ENCODE measurements at regions of chr3 and their contacts with region 1.

Region 1: DNA sequence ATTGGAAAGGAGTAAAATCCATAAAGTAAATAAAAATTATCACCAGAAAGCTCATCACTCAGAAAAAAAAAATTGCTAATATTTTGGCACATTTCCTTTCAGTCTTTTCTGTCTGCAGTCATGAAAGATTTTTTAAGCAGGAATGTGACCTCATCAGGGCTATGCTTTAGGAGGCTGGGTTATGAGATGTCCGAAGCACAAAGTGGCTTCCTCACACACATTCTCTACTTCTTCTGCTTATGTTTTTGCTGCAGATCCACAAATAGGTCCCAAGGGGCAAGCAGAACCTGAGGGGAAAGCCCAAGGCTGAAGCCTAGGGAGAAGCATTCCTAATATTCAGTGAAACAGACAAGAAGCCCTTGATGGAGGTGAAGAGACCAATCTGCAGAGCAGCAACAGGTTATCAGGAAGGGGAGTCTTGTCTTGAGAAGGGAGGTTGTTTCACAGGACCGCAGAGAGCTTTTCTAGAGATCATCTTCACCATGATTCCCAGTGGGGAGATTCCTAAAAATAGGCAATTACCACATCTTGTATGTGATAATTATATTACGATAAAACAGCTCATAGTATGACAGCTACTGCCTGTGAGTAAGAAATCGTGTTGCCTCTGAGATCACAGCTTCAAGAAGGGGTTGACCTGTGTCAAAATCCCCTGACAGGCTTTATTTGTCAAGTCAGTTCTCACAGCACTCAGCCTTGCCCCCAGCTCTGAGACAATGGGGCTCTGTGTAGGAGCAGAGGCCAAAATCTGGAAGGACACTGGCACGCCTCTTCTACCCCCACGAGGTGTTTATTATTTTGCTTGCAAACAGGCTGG is 60.5 kb downstream of the IGF2BP2 start:
- DNase-seq: no peak
- H3K4me3 Mint-ChIP-seq: no peak overlapping the region
- H3K27ac Mint-ChIP-seq: no peak overlapping the region
- H3K4me1 Mint-ChIP-seq: no peaks in the 10 kb centered on the region
- H3K27me3 Mint-ChIP-seq: peaks cover 58% of the 10 kb centered on the region

Region 2: DNA sequence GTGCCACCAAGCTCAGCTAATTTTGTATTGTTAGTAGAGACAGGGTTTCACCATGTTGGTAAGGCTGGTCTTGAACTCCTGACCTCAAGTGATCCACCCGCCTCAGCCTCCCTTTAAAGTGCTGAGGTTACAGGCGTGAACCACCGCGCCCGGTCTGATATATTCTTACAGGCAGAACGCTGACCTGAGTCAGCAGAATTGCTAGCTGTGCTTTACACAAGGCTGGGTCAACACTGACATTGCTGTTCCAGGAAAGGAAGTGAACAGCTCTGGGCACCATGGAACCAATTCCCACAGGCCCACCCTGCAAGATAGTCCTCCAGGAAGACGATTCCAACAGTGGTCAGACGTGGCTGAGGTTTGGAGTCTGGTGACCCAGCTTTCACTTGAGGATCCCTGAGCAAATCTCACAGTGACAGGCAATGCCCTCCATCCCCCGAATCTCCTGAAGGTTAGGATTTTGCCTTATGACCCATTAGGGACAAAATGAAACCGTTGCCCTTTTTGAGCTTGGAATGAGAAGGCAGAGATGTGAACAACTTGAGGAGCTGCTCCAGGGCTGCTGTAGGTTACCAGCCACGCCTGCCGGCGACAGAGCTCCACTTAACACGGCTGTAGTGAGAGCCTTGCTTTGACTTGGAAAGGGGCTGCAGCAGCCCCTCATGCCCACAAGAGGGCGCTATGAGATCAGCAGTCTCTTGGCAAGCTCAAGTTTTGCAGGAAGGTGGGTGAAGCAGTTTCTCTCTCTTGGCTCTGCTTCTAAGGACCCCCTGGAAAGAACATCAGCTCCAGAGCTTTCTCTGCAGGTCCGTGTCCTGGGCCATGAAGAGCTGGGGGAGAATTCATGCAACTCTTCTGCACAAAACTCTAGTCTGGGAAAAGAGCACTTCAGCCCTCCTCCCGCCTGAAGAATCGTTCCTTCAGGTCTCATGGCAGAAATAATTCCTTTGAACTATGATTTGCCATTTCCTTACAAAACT is 104.1 kb before region 1 on chr3:
- intact Hi-C with region 1: loop called (anchors 1 kb)
- DNase-seq: peak; percentile 91
- H3K4me3 Mint-ChIP-seq: no peak overlapping the region
- H3K27ac Mint-ChIP-seq: no peak overlapping the region
- H3K4me1 Mint-ChIP-seq: no peaks in the 10 kb centered on the region
- H3K27me3 Mint-ChIP-seq: peaks cover 16% of the 10 kb centered on the region

Region 3: GRCh38 chr3:185677146-185677829 is 87.1 kb before region 1 on chr3:
- intact Hi-C with region 1: loop called (anchors 1 kb)
- DNase-seq: peak; percentile 74
- H3K4me3 Mint-ChIP-seq: no peak overlapping the region
- H3K27ac Mint-ChIP-seq: no peak overlapping the region
- H3K4me1 Mint-ChIP-seq: no peaks in the 10 kb centered on the region
- H3K27me3 Mint-ChIP-seq: peaks cover 38% of the 10 kb centered on the region

Region 4: DNA sequence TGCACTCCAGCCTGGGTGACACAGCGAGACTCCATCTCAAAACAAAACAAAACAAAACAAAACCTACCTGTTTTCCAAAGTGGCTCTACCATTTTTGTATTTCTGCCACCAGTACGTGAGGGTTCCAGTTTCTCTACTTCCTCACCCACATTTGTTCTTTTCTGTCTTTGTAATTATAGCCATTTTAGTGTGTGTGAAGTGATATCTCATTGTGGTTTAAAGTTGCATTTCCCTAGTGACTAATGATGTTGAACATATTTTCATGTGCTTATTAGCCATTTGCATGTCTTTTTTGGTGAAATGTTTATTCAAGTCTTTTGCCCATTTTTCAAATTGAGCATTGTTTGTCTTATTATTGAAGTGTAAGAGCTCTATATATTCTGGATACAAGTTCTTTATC is 122.7 kb after region 1 on chr3:
- intact Hi-C with region 1: no loop called
- DNase-seq: no peak
- H3K4me3 Mint-ChIP-seq: no peak overlapping the region
- H3K27ac Mint-ChIP-seq: no peak overlapping the region
- H3K4me1 Mint-ChIP-seq: no peaks in the 10 kb centered on the region
- H3K27me3 Mint-ChIP-seq: peaks cover 11% of the 10 kb centered on the region